ENCODE measurements at regions of chr7 and their contacts with region 1.

Region 1: DNA sequence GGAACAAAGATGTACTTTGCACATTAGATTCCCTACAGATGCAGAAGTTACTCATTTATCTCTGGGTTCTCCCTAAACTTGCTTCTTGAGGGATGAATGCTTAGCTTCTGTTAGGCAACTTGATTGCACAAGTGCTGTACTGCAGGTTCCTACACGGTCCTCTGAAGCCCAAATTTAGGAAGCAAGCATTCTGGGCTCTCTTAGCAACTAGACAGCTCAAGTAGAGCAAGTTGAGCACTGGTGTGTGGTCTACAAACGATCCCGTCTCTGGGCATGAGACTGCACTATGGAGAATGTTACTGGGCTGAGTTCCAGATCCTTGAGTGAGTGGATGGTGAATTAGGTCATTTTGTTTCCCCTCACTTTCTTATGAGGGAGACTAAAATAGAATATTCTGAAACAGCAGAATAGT is 14.3 kb downstream of the SEMA3D start:
- DNase-seq: peak; percentile 40 to 56
- ATAC-seq: peak; percentile 87
- H3K4me3 ChIP-seq: no peak overlapping the region
- H3K27ac ChIP-seq: peak overlapping the region in 1 of 2 donors; percentile 90
- H3K4me1 ChIP-seq: peaks cover 0 to 3% of the 10 kb centered on the region in 2 donors
- H3K27me3 ChIP-seq: no peaks in the 10 kb centered on the region

Region 2: DNA sequence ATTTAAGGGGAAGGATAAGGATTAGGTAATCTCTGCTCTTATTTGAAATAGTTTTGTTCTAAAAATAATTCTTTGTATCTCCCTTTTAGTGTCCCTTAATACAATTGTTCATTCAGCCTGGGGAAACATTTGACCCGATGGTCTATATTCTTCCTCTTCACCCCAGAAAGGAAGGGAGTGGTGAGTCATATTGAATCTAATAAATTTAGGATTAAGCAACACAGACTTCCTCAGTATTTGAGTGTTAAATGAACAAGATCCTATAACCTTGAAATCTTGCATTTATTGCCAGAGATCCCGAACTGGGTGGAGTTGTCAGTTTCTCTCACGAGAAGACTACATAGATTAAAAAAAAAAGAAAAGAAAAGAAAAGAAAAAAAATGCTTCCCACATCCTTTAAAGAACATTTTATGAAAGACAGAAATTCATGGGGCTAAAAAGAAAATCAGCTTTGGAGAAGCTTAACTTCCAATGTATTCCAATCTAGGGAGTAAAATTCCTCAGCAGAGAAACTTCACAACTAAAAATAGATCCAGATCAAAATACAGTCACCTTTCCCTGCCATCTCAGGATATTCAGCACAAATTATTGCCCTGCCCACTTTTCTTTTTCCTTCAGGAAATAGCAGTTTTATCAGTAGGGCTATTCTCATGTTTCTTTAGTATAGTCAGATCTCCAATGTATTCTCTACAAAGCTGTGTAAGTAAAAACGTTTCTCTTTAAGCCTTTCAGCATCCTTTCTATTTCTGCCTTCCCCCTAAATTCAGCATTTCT is 67.9 kb before region 1 on chr7:
- intact Hi-C with region 1: loop called in 1 of 2 experiments (anchors 5 kb)
- DNase-seq: no peak
- ATAC-seq: peak; percentile 68
- H3K4me3 ChIP-seq: no peak overlapping the region
- H3K27ac ChIP-seq: no peak overlapping the region
- H3K4me1 ChIP-seq: peaks cover 0 to 6% of the 10 kb centered on the region in 2 donors
- H3K27me3 ChIP-seq: no peaks in the 10 kb centered on the region

Region 3: GRCh38 chr7:85261336-85261735 is 88.8 kb after region 1 on chr7:
- intact Hi-C with region 1: no loop called
- DNase-seq: no peak
- ATAC-seq: no peak
- H3K4me3 ChIP-seq: no peak overlapping the region
- H3K27ac ChIP-seq: no peak overlapping the region
- H3K4me1 ChIP-seq: no peaks in the 10 kb centered on the region
- H3K27me3 ChIP-seq: no peaks in the 10 kb centered on the region

Measured in aorta (tissue), 5 donors.